ENCODE measurements at regions of chr7 and their contacts with region 1.

Region 1: GRCh38 chr7:103856929-103857328 is 132.5 kb downstream of the RELN start:
- DNase-seq: no peak
- ATAC-seq: no peak
- H3K4me3 ChIP-seq: no peak overlapping the region
- H3K27ac ChIP-seq: no peak overlapping the region
- H3K4me1 ChIP-seq: no peaks in the 10 kb centered on the region
- H3K27me3 ChIP-seq: no peaks in the 10 kb centered on the region
- CTCF ChIP-seq: no peak

Region 2: DNA sequence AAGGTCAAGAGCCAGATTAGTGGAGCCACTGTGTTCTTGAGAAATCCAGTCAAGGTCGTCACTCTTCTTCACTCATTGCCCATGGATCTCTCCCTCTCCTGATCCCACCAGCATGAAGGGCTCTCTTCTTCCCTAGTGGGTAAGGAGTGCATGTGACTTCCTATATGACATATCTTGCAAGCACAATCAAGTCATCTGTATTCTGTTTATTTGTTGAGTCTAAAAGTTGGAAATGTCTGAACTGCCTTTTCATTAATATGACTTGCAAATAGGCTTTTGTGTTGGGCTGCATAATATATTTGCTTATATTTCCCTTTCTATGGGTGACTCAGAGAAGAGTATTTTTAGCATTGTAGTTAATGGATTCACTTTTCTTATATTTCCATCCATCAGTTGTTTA is 843.4 kb after region 1 on chr7:
- CTCF ChIA-PET with region 1: no interaction called
- POLR2A ChIA-PET with region 1: interaction called, 12 read pairs
- in situ Hi-C with region 1: no loop called
- intact Hi-C with region 1: no loop called
- DNase-seq: no peak
- ATAC-seq: no peak
- H3K4me3 ChIP-seq: no peak overlapping the region
- H3K27ac ChIP-seq: no peak overlapping the region
- H3K4me1 ChIP-seq: no peaks in the 10 kb centered on the region
- H3K27me3 ChIP-seq: no peaks in the 10 kb centered on the region
- CTCF ChIP-seq: no peak

Measured in Panc1 (cell line).